ENCODE measurements at regions of chr11 and their contacts with region 1.

Region 1: DNA sequence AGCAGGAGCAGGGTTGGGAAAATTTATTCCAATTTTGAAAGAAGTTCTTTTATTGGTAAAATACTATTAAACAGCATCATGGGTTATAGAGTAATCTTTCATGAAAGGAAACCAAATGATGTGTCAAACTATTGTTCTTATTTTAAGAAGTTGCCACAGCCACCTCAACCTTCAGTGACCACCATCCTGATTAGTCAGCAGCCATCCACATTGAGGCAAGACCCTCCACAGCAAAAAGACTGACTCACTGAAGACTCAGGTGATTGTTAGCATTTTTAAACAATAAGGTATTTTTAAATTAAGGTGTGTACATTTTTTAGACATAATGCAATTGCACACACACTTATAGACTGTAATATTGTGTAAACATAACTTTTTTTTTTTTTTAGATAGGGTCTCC is 3.7 kb upstream of the HEPHL1 start:
- DNase-seq: no peak
- H3K4me3 ChIP-seq: no peak overlapping the region
- H3K27ac ChIP-seq: no peak overlapping the region
- H3K4me1 ChIP-seq: no peaks in the 10 kb centered on the region
- H3K27me3 ChIP-seq: no peaks in the 10 kb centered on the region
- CTCF ChIP-seq: no peak
- POLR2A ChIP-seq: no peak

Region 2: DNA sequence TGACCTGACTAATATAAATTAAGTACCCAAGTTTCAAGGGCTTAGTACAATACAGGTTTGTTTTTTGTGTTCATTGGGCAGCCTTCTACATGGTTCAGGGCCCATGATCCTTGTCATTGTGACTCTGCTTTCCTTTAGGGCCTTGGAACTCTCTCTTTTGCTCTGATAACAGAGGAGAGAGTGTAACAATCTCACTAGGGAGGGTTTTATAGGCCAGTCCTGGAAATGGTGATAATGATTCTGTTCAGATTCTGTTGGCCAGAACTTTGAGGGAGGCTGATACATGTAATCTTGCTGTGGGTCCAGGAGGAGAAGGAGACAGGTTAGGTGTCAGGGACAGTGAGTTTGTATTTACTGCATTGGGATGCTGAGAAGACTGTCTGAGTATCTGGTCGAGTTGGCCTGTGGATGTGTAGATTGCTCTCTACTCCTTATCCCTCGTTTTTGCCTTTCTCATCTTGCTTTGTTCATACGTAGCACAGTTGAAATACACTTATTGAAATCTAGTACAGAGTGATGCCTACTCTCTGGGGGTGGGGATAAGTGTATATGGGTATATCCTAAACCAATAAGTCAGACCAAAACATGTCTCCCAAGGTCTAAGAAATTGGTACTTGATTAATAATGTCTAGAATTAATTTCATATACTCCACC is 33.8 kb before region 1 on chr11:
- intact Hi-C with region 1: loop called (anchors 1 kb)
- DNase-seq: no peak
- H3K4me3 ChIP-seq: no peak overlapping the region
- H3K27ac ChIP-seq: no peak overlapping the region
- H3K4me1 ChIP-seq: no peaks in the 10 kb centered on the region
- H3K27me3 ChIP-seq: peaks cover 0 to 3% of the 10 kb centered on the region in 2 donors
- CTCF ChIP-seq: no peak
- POLR2A ChIP-seq: no peak